ENCODE measurements at regions of chr6 and their contacts with region 1.

Region 1: DNA sequence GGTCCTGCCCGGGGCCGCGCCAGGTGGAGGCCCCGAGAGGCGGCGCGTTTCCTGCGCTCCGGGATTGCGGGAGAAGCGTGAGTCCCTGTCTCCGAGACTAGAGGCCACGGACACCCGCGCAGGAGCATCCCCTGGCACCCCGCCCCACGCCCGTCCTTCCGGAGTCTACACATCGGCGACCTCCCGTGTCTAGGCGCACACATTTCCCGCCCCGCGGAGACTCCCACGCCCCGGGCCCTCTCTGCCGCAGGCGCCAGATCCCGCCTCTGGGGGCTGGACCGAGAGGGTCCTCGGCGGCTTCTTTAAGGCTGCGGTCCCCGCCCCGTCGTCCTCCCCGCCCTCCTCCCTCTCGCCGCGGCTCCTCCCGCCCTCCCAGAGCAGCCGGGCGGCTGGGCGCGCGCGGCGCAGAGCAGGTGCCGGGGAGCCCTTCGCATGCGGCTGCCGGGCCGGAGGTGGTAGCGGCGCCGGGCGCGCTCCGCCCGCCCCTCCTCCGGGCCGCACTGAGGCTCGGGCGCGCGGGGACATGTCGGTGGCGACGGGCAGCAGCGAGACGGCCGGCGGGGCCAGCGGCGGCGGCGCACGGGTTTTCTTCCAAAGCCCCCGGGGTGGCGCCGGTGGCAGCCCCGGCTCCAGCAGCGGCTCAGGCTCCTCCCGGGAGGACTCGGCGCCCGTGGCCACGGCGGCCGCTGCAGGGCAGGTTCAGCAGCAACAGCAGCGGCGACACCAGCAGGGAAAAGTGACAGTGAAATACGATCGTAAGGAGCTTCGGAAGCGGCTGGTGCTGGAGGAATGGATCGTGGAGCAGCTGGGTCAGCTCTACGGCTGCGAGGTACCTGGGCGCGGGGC is at the start of gene PPP1R14C:
- DNase-seq: peak; percentile 67 to 92 (median 84)
- ATAC-seq: peak; percentile 82
- H3K4me3 ChIP-seq: peak within 1 kb of the TSS; percentile 64
- H3K27ac ChIP-seq: peak within 1 kb of the TSS; percentile 9; the same call in 2 of the 3 replicates
- H3K4me1 ChIP-seq: peaks cover 29 to 30% of the 10 kb centered on the region in 2 experiments; a peak in 4 of 5 replicates
- H3K27me3 ChIP-seq: peaks cover 6 to 18% of the 10 kb centered on the region in 2 experiments; a peak in 4 of 5 replicates
- CTCF ChIP-seq: no peak
- EP300 ChIP-seq: no peak
- POLR2A ChIP-seq: no peak
- RAD21 ChIP-seq: no peak
- polyA plus RNA-seq, gene PPP1R14C: 8.1 to 14.5 TPM

Region 2: GRCh38 chr6:150091476-150091875 is 51.4 kb before region 1 on chr6:
- CTCF ChIA-PET with region 1: no interaction called
- POLR2A ChIA-PET with region 1: no interaction called
- in situ Hi-C with region 1: no loop called
- intact Hi-C with region 1: loop called (anchors 5 kb)
- DNase-seq: no peak
- ATAC-seq: no peak
- H3K4me3 ChIP-seq: no peak overlapping the region
- H3K27ac ChIP-seq: no peak overlapping the region
- H3K4me1 ChIP-seq: peaks cover 0 to 5% of the 10 kb centered on the region in 2 experiments; a peak in 2 of 5 replicates
- H3K27me3 ChIP-seq: peaks cover 54 to 75% of the 10 kb centered on the region in 2 experiments
- CTCF ChIP-seq: no peak
- EP300 ChIP-seq: no peak
- POLR2A ChIP-seq: no peak
- RAD21 ChIP-seq: no peak